ENCODE measurements at regions of chr11 and their contacts with region 1.

Region 1: GRCh38 chr11:18731949-18732821 is 6.2 kb upstream of the IGSF22 start:
- DNase-seq: peak; percentile 64 to 84
- ATAC-seq: peak; percentile 65 to 89 (median 81)
- H3K4me3 ChIP-seq: no peak overlapping the region
- H3K4me3 Mint-ChIP-seq: no peak overlapping the region
- H3K27ac ChIP-seq: no peak overlapping the region
- H3K27ac Mint-ChIP-seq: peak overlapping the region in 1 of 2 donors; percentile 28
- H3K4me1 ChIP-seq: no peaks in the 10 kb centered on the region
- H3K4me1 Mint-ChIP-seq: peaks cover 0 to 6% of the 10 kb centered on the region in 2 donors
- H3K27me3 ChIP-seq: no peaks in the 10 kb centered on the region
- H3K27me3 Mint-ChIP-seq: peaks cover 0 to 3% of the 10 kb centered on the region in 2 donors
- CTCF ChIP-seq: peak; percentile 98

Region 2: GRCh38 chr11:18115360-18116127 is 616.6 kb before region 1 on chr11:
- intact Hi-C with region 1: loop called (anchors 10 kb)
- DNase-seq: peak; percentile 38 to 82
- ATAC-seq: peak; percentile 83 to 91 (median 84)
- H3K4me3 ChIP-seq: no peak overlapping the region
- H3K4me3 Mint-ChIP-seq: no peak overlapping the region
- H3K27ac ChIP-seq: no peak overlapping the region
- H3K27ac Mint-ChIP-seq: no peak overlapping the region
- H3K4me1 ChIP-seq: no peaks in the 10 kb centered on the region
- H3K4me1 Mint-ChIP-seq: peaks cover 0 to 5% of the 10 kb centered on the region in 2 donors
- H3K27me3 ChIP-seq: no peaks in the 10 kb centered on the region
- H3K27me3 Mint-ChIP-seq: peaks cover 20 to 41% of the 10 kb centered on the region in 2 donors
- CTCF ChIP-seq: peak; percentile 79

Region 3: DNA sequence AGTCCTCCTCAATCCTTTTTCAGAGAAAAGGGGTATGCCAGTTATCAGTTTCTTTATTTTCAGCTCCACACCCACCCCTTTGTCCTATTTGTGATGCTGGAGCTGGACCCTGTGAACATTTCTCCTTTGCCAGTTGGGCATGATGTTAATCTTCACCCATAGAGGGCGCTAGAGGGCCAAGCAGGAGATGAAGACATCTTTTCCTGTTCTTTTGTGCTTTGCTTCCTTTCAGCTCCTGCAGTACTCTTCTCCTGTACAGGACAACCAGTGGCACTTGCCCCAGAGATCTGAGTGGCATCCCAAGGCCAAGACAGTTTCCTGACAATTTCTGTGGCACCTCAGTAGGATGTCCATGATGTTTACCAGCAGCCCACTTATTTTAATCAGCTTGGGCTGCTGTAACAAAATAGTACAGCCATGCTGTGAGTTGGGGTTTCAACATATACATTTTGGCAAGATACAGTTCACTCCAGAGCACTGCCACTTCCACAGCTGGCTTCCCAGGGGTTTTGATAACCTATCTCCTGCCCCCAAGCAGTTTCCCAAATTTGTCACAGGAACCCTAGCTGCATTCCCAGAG is 488.3 kb before region 1 on chr11:
- intact Hi-C with region 1: loop called (anchors 1 kb)
- DNase-seq: peak; percentile 40 to 85
- ATAC-seq: peak; percentile 58 to 80 (median 76)
- H3K4me3 ChIP-seq: no peak overlapping the region
- H3K4me3 Mint-ChIP-seq: no peak overlapping the region
- H3K27ac ChIP-seq: no peak overlapping the region
- H3K27ac Mint-ChIP-seq: no peak overlapping the region
- H3K4me1 ChIP-seq: no peaks in the 10 kb centered on the region
- H3K4me1 Mint-ChIP-seq: no peaks in the 10 kb centered on the region
- H3K27me3 ChIP-seq: peaks cover 7% of the 10 kb centered on the region
- H3K27me3 Mint-ChIP-seq: peaks cover 22 to 33% of the 10 kb centered on the region in 2 donors
- CTCF ChIP-seq: peak; percentile 90

Region 4: DNA sequence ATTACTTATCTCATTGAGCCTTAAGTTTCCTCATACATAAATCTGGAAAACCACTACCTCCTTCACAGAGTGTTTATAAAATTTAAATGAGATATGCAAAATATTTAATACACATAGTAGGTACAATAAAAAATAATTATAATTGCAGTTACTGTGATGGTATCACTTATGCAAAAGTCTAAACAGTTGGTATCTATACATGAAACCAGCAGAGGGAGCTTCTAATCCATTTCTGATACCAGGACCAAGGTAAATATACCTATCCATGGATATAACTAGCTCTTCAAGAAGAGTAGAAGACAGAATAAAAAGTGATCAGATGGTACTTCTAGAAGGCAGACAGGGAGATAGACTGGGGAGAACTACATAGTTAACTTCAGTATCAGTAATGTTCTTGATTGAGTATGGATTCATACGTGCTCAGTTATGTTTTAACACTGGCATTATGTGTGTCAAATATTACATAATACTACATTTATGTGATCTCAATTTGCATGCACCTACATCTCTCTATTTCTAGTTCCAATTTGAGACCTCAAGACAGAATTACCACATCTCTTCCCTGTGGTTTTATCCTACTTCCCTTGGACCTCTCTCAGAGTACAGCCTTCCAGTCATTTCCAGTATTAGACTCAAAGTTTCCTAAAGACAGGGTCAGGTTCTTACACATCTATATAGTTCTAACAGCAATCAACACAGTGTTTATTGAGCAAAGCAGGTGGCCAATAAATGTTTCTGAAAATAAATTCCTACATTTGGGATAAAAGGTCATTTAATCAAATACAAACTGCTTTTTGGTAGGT is 191.8 kb before region 1 on chr11:
- intact Hi-C with region 1: loop called (anchors 2 kb)
- DNase-seq: peak in 1 of 2 donors; percentile 70
- ATAC-seq: peak in 2 of 3 donors; percentile 55 to 57
- H3K4me3 ChIP-seq: no peak overlapping the region
- H3K4me3 Mint-ChIP-seq: no peak overlapping the region
- H3K27ac ChIP-seq: no peak overlapping the region
- H3K27ac Mint-ChIP-seq: peak overlapping the region; percentile 11 to 65
- H3K4me1 ChIP-seq: no peaks in the 10 kb centered on the region
- H3K4me1 Mint-ChIP-seq: no peaks in the 10 kb centered on the region
- H3K27me3 ChIP-seq: no peaks in the 10 kb centered on the region
- H3K27me3 Mint-ChIP-seq: no peaks in the 10 kb centered on the region
- CTCF ChIP-seq: peak; percentile 58

Region 5: GRCh38 chr11:18588297-18589252 is 143.6 kb before region 1 on chr11 and contains the start of gene UEVLD:
- intact Hi-C with region 1: loop called (anchors 5 kb)
- DNase-seq: peak; percentile 72 to 80
- ATAC-seq: peak; percentile 54 to 63 (median 55)
- H3K4me3 ChIP-seq: peak within 1 kb of the TSS; percentile 91
- H3K4me3 Mint-ChIP-seq: no peak within 1 kb of the TSS
- H3K27ac ChIP-seq: peak within 1 kb of the TSS; percentile 96
- H3K27ac Mint-ChIP-seq: no peak within 1 kb of the TSS
- H3K4me1 ChIP-seq: peaks cover 14% of the 10 kb centered on the region
- H3K4me1 Mint-ChIP-seq: peaks cover 0 to 5% of the 10 kb centered on the region in 2 donors
- H3K27me3 ChIP-seq: no peaks in the 10 kb centered on the region
- H3K27me3 Mint-ChIP-seq: no peaks in the 10 kb centered on the region
- CTCF ChIP-seq: no peak
- total RNA-seq, gene UEVLD: 13.6 to 17.8 (median 15.6) TPM

Measured in natural killer cell (primary cell).